A549 (cell line): ENCODE measurements at regions of chr1 and their contacts with region 1.

Region 1: GRCh38 chr1:182781841-182782586 is 7.6 kb upstream of the NPL start:
- DNase-seq: peak; percentile 28 to 47
- ATAC-seq: peak; percentile 42 to 78; a peak in 4 of 6 replicates
- H3K4me3 ChIP-seq: no peak overlapping the region
- H3K27ac ChIP-seq: no peak overlapping the region
- H3K4me1 ChIP-seq: no peaks in the 10 kb centered on the region
- CTCF ChIP-seq: peak; percentile 50
- EP300 ChIP-seq: no peak
- POLR2A ChIP-seq: no peak
- RAD21 ChIP-seq: peak; percentile 45 to 68; a peak in 4 of 5 replicates

Region 2: DNA sequence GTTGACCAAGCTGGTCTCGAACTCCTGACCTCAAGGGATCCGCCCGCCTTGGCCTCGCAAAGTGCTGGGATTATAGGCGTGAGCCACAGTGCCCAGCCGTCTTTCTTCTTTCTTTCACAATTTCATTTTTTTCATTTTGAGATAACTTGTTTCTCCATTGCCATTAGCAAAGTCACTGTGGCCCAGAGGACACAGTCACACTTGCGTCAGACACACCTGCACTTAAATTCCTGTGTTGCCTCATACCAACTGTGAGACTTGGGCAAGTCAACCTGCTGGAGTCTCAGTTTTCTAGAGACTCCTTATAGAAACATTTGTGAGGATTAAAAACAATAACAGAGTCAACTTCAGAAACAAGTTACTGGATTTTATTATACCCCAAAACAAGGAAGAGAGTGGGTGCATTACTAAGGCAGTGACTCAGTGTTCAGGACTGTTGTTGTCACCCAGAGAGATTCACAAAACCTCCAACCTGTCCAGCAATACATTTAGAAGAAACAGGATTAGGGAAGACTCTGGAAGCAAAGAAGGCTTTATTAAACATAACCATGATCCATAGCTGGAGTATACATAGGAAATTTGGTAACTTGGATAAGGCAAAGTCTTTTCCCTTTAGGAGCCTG is 384.1 kb before region 1 on chr1:
- CTCF ChIA-PET with region 1: no interaction called
- POLR2A ChIA-PET with region 1: no interaction called
- DNase-seq: no peak
- ATAC-seq: no peak
- H3K4me3 ChIP-seq: no peak overlapping the region
- H3K27ac ChIP-seq: no peak overlapping the region
- H3K4me1 ChIP-seq: no peaks in the 10 kb centered on the region
- CTCF ChIP-seq: no peak
- EP300 ChIP-seq: no peak
- POLR2A ChIP-seq: no peak
- RAD21 ChIP-seq: no peak

Region 3: GRCh38 chr1:182588500-182589452 is 193.2 kb before region 1 on chr1 and contains the start of gene RNASEL:
- CTCF ChIA-PET with region 1: interaction called, 415 read pairs
- POLR2A ChIA-PET with region 1: no interaction called
- DNase-seq: peak; percentile 58 to 74
- ATAC-seq: peak; percentile 98 to 99
- H3K4me3 ChIP-seq: peak within 1 kb of the TSS; percentile 46
- H3K27ac ChIP-seq: peak within 1 kb of the TSS; percentile 62 to 90
- H3K4me1 ChIP-seq: 0 out of 3 replicates have a peak, but pooled peaks cover 5% of the 10 kb centered on the region
- CTCF ChIP-seq: no peak
- EP300 ChIP-seq: no peak
- POLR2A ChIP-seq: peak; percentile 36; the same call in 1 of the 2 replicates
- RAD21 ChIP-seq: no peak
- polyA plus RNA-seq, gene RNASEL: 4.1 and 4.6 TPM in 2 replicates

Region 4: GRCh38 chr1:182768963-182769362 is 13.1 kb before region 1 on chr1:
- CTCF ChIA-PET with region 1: interaction called, 39 read pairs
- POLR2A ChIA-PET with region 1: interaction called, 5 read pairs
- DNase-seq: no peak
- ATAC-seq: no peak; a peak in 1 of 6 replicates
- H3K4me3 ChIP-seq: no peak overlapping the region
- H3K27ac ChIP-seq: no peak overlapping the region
- H3K4me1 ChIP-seq: no peaks in the 10 kb centered on the region
- CTCF ChIP-seq: no peak
- EP300 ChIP-seq: no peak
- POLR2A ChIP-seq: no peak
- RAD21 ChIP-seq: no peak

Region 5: GRCh38 chr1:182795563-182796228 is 13.7 kb after region 1 on chr1:
- CTCF ChIA-PET with region 1: interaction called, 13 read pairs
- POLR2A ChIA-PET with region 1: no interaction called
- DNase-seq: peak; percentile 15 to 68
- ATAC-seq: peak in 1 of 2 experiments; percentile 64; a peak in 3 of 6 replicates
- H3K4me3 ChIP-seq: no peak overlapping the region
- H3K27ac ChIP-seq: 0 out of 6 replicates have a peak overlapping the region, but pooled peaks of 1 of the 2 experiments have one; percentile 33
- H3K4me1 ChIP-seq: no peaks in the 10 kb centered on the region
- CTCF ChIP-seq: no peak
- EP300 ChIP-seq: no peak
- POLR2A ChIP-seq: no peak
- RAD21 ChIP-seq: no peak

Region 6: GRCh38 chr1:182829285-182829932 is 47.4 kb after region 1 on chr1:
- CTCF ChIA-PET with region 1: no interaction called
- POLR2A ChIA-PET with region 1: no interaction called
- DNase-seq: no peak
- ATAC-seq: no peak
- H3K4me3 ChIP-seq: no peak overlapping the region
- H3K27ac ChIP-seq: no peak overlapping the region
- H3K4me1 ChIP-seq: no peaks in the 10 kb centered on the region
- CTCF ChIP-seq: no peak
- EP300 ChIP-seq: no peak
- POLR2A ChIP-seq: no peak
- RAD21 ChIP-seq: no peak

Region 7: DNA sequence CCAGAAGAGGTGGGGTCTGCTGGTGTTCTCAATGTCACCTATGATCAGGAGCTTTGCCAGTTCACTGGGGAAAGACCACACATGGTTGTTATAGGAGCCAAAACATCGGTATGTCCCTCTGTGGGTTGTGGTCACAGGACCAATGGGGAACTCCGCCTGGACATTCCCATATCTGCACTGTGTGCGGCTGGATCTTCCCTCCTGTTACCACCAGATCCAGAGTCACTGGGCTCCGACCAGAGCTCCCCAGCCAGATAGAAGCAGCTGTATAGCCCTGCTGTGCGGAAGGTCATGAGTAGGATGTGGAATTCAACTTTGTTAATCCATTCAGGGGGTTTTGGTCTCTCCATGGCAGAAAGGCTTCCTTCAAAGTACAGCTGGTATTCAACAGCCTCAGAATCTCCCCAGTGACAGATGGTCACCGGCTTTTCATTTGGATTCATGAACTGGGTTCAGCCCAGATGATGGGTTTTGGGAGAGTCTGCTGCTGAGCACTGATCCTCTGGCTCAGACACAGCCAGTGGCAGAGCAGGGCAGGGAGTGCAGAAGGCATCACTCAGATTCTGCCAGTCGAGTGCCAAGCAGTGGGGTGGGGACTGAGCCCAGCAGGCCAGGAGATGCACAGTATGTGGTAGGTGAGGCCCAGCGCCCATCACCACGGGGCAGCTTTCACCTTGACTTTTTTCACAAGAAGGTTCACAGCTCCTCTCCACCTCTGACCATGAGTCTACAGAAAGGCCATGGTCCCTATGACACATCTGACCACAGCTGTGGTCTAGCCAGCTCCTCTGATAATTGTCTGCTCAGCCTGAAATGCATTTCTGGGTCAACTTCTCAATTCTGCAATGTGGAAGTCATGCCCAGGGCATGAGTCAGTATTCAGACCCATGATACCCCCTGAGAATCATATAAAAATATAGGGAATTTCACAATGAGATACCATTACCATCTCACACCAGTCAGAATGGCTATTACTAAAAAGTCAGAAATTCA is 173.9 kb after region 1 on chr1:
- CTCF ChIA-PET with region 1: no interaction called
- POLR2A ChIA-PET with region 1: no interaction called
- DNase-seq: peak in 1 of 2 experiments; percentile 13
- ATAC-seq: peak; percentile 60 to 64; a peak in 5 of 6 replicates
- H3K4me3 ChIP-seq: no peak overlapping the region
- H3K27ac ChIP-seq: no peak overlapping the region
- H3K4me1 ChIP-seq: no peaks in the 10 kb centered on the region
- CTCF ChIP-seq: no peak
- EP300 ChIP-seq: no peak
- POLR2A ChIP-seq: no peak
- RAD21 ChIP-seq: no peak